ENCODE measurements at regions of chr3 and their contacts with region 1.

Region 1: GRCh38 chr3:197711973-197712707 is 24.6 kb downstream of the RUBCN start:
- DNase-seq: peak; percentile 74 to 96
- ATAC-seq: peak; percentile 99 to 100 (median 100)
- H3K4me3 ChIP-seq: peak overlapping the region; percentile 52
- H3K4me3 Mint-ChIP-seq: peak overlapping the region; percentile 93
- H3K27ac ChIP-seq: peak overlapping the region; percentile 98
- H3K27ac Mint-ChIP-seq: peak overlapping the region; percentile 95 to 97
- H3K4me1 ChIP-seq: peaks cover 13% of the 10 kb centered on the region
- H3K4me1 Mint-ChIP-seq: peaks cover 16 to 19% of the 10 kb centered on the region in 2 donors
- H3K27me3 ChIP-seq: no peaks in the 10 kb centered on the region
- H3K27me3 Mint-ChIP-seq: no peaks in the 10 kb centered on the region
- CTCF ChIP-seq: no peak

Region 2: GRCh38 chr3:197736491-197737318 is 24.6 kb after region 1 on chr3 and contains the start of gene RUBCN:
- intact Hi-C with region 1: loop called (anchors 1 kb)
- DNase-seq: peak; percentile 76 to 96
- ATAC-seq: peak; percentile 88 to 98 (median 95)
- H3K4me3 ChIP-seq: peak within 1 kb of the TSS; percentile 85
- H3K4me3 Mint-ChIP-seq: peak within 1 kb of the TSS; percentile 92
- H3K27ac ChIP-seq: peak within 1 kb of the TSS; percentile 64
- H3K27ac Mint-ChIP-seq: peak within 1 kb of the TSS; percentile 77
- H3K4me1 ChIP-seq: peaks cover 23% of the 10 kb centered on the region
- H3K4me1 Mint-ChIP-seq: peaks cover 23 to 26% of the 10 kb centered on the region in 2 donors
- H3K27me3 ChIP-seq: no peaks in the 10 kb centered on the region
- H3K27me3 Mint-ChIP-seq: no peaks in the 10 kb centered on the region
- CTCF ChIP-seq: no peak
- total RNA-seq, gene RUBCN: 51.2 to 58.5 (median 57.6) TPM

Region 3: GRCh38 chr3:197749601-197750395 is 37.7 kb after region 1 on chr3 and contains the start of gene FYTTD1:
- intact Hi-C with region 1: loop called (anchors 5 kb)
- DNase-seq: peak; percentile 89 to 95
- ATAC-seq: peak; percentile 83 to 93 (median 89)
- H3K4me3 ChIP-seq: peak within 1 kb of the TSS; percentile 86
- H3K4me3 Mint-ChIP-seq: peak within 1 kb of the TSS; percentile 97
- H3K27ac ChIP-seq: peak within 1 kb of the TSS; percentile 91
- H3K27ac Mint-ChIP-seq: peak within 1 kb of the TSS; percentile 87 to 90
- H3K4me1 ChIP-seq: peaks cover 16% of the 10 kb centered on the region
- H3K4me1 Mint-ChIP-seq: peaks cover 41 to 48% of the 10 kb centered on the region in 2 donors
- H3K27me3 ChIP-seq: no peaks in the 10 kb centered on the region
- H3K27me3 Mint-ChIP-seq: no peaks in the 10 kb centered on the region
- CTCF ChIP-seq: peak; percentile 47
- total RNA-seq, gene FYTTD1: 58.0 to 75.6 (median 72.2) TPM

Region 4: DNA sequence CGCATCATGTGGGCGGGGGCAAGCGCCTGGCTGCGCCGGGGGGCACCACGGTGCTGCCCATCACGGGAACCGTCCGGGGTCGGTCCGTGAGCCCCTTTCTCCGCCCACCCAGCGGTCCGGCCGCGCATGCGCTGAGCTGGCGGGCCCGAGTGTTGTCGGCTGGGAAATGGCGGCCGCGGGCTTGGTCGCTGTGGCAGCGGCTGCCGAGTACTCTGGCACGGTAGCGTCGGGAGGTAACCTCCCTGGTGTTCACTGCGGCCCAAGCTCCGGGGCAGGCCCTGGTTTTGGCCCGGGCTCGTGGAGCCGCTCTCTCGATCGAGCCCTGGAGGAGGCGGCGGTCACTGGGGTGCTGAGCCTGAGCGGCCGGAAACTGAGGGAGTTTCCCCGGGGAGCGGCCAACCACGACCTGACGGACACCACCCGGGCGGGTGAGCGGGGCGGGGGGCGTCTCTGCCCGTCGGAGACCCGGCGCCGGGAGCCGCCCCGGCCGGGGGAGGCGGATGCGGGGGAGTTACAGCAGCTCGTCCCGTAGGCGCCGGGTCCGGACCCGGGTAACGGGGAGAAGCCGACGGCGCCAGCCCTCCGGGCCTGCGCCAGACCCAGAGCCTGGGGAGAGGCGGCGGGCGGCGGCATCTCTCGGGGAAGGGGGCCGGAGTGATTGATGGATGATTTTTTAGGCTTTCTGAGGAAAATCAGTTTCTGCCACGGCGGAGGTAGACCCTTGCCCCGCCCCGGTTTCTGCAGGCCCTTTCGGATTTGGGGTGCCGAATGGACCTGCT is 79.2 kb after region 1 on chr3 and contains the start of gene LRCH3:
- intact Hi-C with region 1: loop called (anchors 1 kb)
- DNase-seq: peak; percentile 83 to 90
- ATAC-seq: peak; percentile 71 to 85 (median 80)
- H3K4me3 ChIP-seq: peak within 1 kb of the TSS; percentile 94
- H3K4me3 Mint-ChIP-seq: peak within 1 kb of the TSS; percentile 93
- H3K27ac ChIP-seq: peak within 1 kb of the TSS; percentile 99
- H3K27ac Mint-ChIP-seq: peak within 1 kb of the TSS; percentile 94 to 97
- H3K4me1 ChIP-seq: peaks cover 12% of the 10 kb centered on the region
- H3K4me1 Mint-ChIP-seq: peaks cover 40 to 45% of the 10 kb centered on the region in 2 donors
- H3K27me3 ChIP-seq: no peaks in the 10 kb centered on the region
- H3K27me3 Mint-ChIP-seq: no peaks in the 10 kb centered on the region
- CTCF ChIP-seq: no peak
- total RNA-seq, gene LRCH3: 68.1 to 90.5 (median 90.3) TPM

Measured in natural killer cell (primary cell).